Breast epithelium (tissue), 4 donors: ENCODE measurements at regions of chr2 and their contacts with region 1.

Region 1: DNA sequence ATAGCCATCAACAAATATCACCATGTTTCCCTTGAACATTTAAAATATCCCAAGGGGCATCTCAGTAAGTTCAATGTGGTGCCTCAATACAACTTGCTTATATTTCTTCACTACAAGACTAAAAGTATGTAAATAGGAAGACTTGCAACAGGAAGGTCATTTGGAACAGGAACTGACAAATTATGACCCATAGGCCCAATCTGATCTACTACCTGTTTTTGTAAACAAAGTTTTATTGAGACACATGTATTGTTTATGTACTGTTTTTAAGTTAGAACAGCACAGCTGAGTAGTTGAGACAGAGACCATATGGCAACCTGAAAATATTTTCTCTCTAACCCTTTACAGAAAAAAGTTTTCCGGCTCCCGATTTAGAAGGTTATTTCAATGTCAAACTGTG is 154.8 kb upstream of the TFPI start:
- DNase-seq: no peak
- H3K4me3 ChIP-seq: no peak overlapping the region
- H3K27ac ChIP-seq: no peak overlapping the region
- H3K4me1 ChIP-seq: no peaks in the 10 kb centered on the region
- H3K27me3 ChIP-seq: no peaks in the 10 kb centered on the region
- CTCF ChIP-seq: no peak
- POLR2A ChIP-seq: no peak

Region 2: GRCh38 chr2:186980787-186981550 is 728.1 kb before region 1 on chr2:
- intact Hi-C with region 1: loop called (anchors 5 kb)
- DNase-seq: no peak
- H3K4me3 ChIP-seq: no peak overlapping the region
- H3K27ac ChIP-seq: no peak overlapping the region
- H3K4me1 ChIP-seq: no peaks in the 10 kb centered on the region
- H3K27me3 ChIP-seq: no peaks in the 10 kb centered on the region
- CTCF ChIP-seq: no peak
- POLR2A ChIP-seq: no peak